ENCODE measurements at regions of chr7 and their contacts with region 1.

Region 1: GRCh38 chr7:90312745-90313144 is 8.4 kb downstream of the FAM237B start:
- DNase-seq: peak; percentile 14
- H3K4me3 ChIP-seq: no peak overlapping the region
- H3K27ac ChIP-seq: no peak overlapping the region
- H3K4me1 ChIP-seq: no peaks in the 10 kb centered on the region
- CTCF ChIP-seq: peak; percentile 69

Region 2: DNA sequence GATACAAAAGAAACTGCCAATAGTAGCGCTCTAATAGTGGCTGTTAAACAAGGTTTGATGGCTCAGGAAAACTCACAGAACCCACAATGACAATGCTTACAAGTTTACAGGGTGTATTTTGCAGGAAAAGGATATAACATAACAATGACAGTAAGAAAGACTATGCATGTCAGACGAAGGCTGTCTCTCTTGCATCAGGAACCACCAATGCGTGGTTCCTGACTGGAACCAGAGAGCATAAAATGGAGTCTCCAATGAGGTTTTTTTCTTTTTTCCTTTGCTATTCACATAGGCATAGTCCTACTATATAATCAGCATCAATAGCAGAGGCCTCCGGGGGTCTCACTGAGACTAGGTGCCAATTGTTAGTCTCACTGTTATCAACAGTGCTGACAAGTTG is 278.9 kb before region 1 on chr7:
- CTCF ChIA-PET with region 1: no interaction called
- POLR2A ChIA-PET with region 1: no interaction called
- intact Hi-C with region 1: no loop called
- DNase-seq: no peak
- H3K4me3 ChIP-seq: no peak overlapping the region
- H3K27ac ChIP-seq: no peak overlapping the region
- H3K4me1 ChIP-seq: no peaks in the 10 kb centered on the region
- CTCF ChIP-seq: no peak

Region 3: DNA sequence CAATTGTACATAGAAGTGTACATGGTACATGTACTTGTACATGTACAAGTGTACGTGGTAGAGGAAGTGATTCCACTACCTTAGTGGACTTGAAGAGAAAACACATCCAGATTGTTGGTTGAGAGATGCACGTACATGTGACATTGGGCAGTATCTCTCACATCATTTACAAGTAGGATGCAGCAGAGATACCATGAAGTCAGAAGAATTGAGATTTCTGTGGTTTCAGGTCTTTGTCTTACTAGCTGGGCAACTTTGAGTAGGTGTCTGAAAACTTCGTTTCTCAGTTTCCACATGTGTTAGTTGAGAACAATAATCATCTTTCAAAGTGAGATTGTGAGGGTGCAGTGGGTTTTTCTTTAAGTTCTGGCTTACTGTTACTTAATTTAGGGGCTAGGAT is 112.0 kb after region 1 on chr7:
- CTCF ChIA-PET with region 1: no interaction called
- POLR2A ChIA-PET with region 1: no interaction called
- intact Hi-C with region 1: loop called (anchors 2 kb)
- DNase-seq: no peak
- H3K4me3 ChIP-seq: no peak overlapping the region
- H3K27ac ChIP-seq: no peak overlapping the region
- H3K4me1 ChIP-seq: no peaks in the 10 kb centered on the region
- CTCF ChIP-seq: no peak

Region 4: GRCh38 chr7:90788052-90788451 is 475.3 kb after region 1 on chr7:
- CTCF ChIA-PET with region 1: no interaction called
- POLR2A ChIA-PET with region 1: no interaction called
- intact Hi-C with region 1: no loop called
- DNase-seq: no peak
- H3K4me3 ChIP-seq: no peak overlapping the region
- H3K27ac ChIP-seq: no peak overlapping the region
- H3K4me1 ChIP-seq: no peaks in the 10 kb centered on the region
- CTCF ChIP-seq: no peak

Measured in OCI-LY7 (cell line).